GM10248 (cell line): ENCODE measurements at regions of chr2 and their contacts with region 1.

Region 1: GRCh38 chr2:74587664-74588277 is 33.3 kb downstream of the DOK1 start:
- DNase-seq: peak; percentile 82
- CTCF ChIP-seq: peak; percentile 73

Region 2: DNA sequence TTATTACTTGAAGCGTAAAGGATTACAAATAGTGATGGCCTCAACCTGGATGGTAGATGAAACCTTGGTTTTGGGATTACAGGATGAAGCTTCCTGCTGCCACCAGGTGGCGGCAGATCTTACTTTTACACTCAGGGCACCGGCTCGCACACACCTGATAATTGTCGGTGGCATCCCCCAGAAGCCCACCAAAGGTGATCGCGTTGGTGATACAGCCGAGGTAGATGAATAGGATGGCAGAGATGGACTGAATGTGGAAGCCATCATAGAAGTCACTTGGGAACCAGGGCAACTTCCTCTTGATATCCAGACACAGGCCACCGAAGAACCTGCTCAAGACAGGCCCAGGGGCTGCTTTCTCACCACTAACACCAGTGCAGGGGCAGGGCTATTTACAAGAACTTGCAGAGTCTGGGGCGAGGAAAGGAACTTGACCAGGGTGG is 337.6 kb before region 1 on chr2:
- CTCF ChIA-PET with region 1: interaction called, 31 read pairs
- POLR2A ChIA-PET with region 1: no interaction called
- DNase-seq: peak; percentile 82
- CTCF ChIP-seq: peak; percentile 86

Region 3: GRCh38 chr2:74345272-74345943 is 242.4 kb before region 1 on chr2:
- CTCF ChIA-PET with region 1: no interaction called
- POLR2A ChIA-PET with region 1: no interaction called
- DNase-seq: no peak
- CTCF ChIP-seq: no peak

Region 4: GRCh38 chr2:74472086-74472944 is 115.5 kb before region 1 on chr2 and contains the start of gene MRPL53:
- CTCF ChIA-PET with region 1: interaction called, 27 read pairs
- POLR2A ChIA-PET with region 1: no interaction called
- DNase-seq: peak; percentile 88
- CTCF ChIP-seq: no peak

Region 5: DNA sequence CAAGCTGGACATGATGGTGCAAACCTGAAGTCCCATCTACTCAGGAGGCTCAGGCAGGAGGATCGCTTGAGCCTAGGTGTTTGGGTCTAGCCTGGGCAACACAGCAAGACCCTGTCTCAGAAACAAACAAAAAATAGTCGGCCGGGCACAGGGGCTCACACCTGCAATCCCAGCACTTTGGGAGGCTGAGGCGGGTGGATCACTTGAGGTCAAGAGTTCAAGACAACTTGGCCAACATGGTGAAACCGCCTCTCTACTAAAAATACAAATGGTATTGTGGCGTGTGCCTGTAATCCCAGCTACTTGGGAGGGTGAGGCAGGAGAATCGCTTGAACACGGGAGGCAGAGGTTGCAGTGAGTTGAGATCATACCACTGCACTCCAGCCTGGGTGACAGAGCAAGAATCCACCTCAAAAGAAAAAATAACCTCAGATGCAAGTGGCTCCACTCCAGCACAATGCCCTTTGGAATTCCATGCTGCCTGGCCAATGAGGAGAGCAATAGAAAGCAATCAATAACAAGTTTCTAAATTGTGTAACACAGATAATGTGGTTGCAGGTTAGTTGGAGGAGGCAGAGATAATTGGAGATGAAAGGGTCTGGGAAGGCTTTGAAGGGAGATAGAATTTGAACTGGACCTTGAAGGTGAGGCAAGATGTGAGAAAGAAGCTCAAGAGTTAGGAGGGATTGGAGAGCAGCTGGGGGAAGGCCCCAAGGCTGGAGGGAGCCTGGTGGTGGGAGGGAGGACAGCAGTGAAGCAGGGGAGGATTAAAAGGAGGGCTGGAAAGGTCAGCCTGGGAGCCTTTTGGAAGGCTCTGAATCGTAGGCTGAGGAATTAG is 98.9 kb before region 1 on chr2:
- CTCF ChIA-PET with region 1: interaction called, 106 read pairs
- POLR2A ChIA-PET with region 1: no interaction called
- DNase-seq: no peak
- CTCF ChIP-seq: no peak

Region 6: DNA sequence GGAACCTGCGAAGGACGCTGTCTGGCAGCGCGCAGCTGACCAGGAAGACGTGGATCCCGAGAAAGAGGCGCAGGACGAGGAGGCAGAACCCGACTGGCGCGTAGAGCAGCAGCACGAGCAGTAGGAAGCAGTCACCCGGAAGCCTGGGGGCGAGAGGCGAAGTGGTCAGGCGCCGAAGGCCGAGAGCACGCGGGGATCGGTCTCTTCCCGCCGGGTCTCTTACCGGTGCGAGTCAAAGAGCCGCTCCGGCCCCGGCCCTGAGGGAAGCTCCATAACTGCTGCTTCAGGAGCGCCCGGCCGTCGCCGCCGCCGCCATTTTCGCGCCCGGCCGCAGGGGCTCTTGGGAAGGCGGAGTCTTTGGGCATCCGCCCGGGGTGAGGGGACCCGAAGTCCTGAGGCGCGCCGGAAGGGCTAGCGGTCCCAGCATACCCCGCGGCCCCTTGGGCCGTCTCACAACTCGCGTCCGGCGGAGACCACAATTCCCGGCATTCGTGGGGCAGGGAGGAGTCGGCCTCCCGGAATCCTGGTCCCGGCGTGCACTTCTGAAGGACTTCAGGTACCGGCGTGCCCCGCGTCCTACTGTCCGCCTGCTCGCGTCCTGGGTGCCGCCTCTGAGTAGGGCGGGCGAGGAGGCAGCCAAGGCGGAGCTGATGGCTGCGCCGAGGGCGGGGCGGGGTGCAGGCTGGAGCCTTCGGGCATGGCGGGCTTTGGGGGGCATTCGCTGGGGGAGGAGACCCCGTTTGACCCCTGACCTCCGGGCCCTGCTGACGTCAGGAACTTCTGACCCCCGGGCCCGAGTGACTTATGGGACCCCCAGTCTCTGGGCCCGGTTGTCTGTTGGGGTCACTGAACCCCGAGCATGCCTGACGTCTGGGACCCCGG is 58.2 kb before region 1 on chr2 and contains the starts of genes AUP1 and HTRA2:
- CTCF ChIA-PET with region 1: interaction called, 76 read pairs
- POLR2A ChIA-PET with region 1: interaction called, 7 read pairs
- DNase-seq: peak; percentile 98
- CTCF ChIP-seq: no peak

Region 7: DNA sequence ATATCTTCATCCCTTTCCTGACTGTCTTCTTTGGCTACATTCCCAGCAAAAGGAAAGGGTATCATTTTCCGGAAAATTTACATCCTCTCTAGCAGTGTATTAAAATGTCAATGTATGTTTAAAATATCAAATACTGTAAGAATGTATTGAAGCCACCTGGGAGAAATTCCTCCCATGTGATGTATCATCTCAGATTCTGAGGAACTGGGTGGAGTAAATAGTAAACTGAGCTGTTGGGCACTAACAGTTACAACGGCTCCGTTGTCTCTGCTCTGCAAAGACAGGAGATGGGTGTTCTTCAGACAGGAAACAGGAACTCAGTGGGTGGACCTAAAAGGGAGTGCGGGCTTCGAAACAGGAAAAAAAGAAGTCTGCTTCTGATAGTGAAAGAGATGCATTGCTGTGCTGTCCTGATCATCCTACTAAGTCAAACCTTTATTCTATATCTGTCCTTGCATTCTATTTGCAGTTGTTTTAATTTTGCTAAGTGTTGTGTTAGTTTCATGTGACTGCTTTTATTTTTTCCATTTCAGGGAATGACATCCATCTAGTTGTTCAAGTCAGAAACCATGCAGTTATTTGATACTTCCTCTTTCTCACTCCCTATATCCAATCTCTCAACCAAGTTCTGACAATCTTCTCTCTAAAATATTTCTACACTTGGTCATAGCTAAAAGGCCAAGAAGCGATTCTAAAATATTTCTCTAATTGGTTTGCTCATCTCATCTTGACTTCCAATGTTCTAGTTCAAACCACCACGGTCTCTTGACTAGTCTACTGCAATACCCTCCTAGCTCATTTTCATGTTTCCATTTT is 13.8 kb before region 1 on chr2:
- CTCF ChIA-PET with region 1: interaction called, 188 read pairs
- POLR2A ChIA-PET with region 1: interaction called, 3 read pairs
- DNase-seq: peak; percentile 40
- CTCF ChIP-seq: no peak

Region 8: DNA sequence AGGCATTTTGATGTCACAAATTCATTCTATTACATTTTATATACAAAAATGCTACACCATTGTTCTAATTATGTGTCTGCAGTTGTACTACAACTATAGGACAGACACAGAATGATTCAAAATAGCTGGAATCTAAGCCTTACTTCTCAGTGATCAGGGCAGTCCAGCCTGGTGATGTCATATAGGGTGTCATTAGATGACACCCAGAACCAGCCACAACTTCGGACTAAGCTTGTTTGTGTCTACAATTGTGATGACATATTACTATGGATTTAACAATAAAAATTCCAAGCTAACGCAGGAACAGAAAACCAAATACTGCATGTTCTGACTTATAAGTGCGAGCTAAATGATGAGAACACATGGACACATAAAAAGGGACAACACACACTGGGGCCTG is 29.4 kb after region 1 on chr2:
- CTCF ChIA-PET with region 1: interaction called, 16 read pairs
- POLR2A ChIA-PET with region 1: no interaction called
- DNase-seq: no peak
- CTCF ChIP-seq: no peak